HepG2 (cell line): ENCODE measurements at regions of chr7 and their contacts with region 1.

Region 1: DNA sequence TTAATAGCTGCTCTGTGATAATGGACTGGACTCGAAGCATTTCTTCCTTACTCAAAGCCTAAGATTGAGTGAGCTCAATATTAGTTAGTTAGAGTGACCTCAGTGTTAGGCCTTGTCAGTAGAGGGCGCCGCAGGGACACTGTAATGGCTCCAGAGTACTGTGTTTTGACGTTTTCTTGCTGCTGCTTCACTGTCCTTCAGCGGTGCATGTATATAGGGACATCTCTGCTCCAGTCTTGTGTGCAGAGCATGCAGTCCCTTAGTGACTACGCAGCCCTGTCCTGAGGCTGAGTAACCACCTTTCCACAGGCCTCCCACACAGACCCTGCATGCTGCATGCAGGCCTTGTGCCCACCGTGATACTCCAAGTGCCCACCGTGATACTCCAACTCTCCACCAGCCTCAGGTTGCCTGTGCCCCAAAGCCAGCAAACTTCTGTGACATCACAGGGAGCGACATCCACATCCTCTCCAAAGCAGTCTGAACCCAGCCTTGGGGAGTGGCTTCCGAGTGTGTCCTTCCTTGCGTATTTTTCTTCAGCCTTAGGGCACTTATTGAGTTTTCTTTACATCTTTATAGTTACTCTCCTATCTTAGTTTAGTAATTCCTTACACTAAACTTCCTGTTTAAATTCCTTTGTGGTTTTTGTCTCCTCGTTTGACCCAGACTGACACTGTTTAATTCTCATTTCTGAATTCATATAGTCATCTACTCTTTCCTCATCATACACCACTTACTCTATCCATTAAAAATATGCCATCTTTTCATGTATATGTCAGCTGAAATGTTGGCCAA is 118.2 kb downstream of the JAZF1 start:
- DNase-seq: peak; percentile 40
- ATAC-seq: peak; percentile 97
- H3K4me3 ChIP-seq: no peak overlapping the region
- H3K27ac ChIP-seq: no peak overlapping the region
- H3K4me1 ChIP-seq: no peaks in the 10 kb centered on the region
- H3K27me3 ChIP-seq: peaks cover 0 to 6% of the 10 kb centered on the region in 2 experiments; a peak in 2 of 5 replicates
- CTCF ChIP-seq: peak; percentile 79
- EP300 ChIP-seq: no peak
- POLR2A ChIP-seq: no peak
- RAD21 ChIP-seq: no peak

Region 2: GRCh38 chr7:27472043-27472442 is 590.4 kb before region 1 on chr7:
- CTCF ChIA-PET with region 1: no interaction called
- POLR2A ChIA-PET with region 1: no interaction called
- in situ Hi-C with region 1: no loop called
- intact Hi-C with region 1: no loop called
- DNase-seq: no peak
- ATAC-seq: no peak
- H3K4me3 ChIP-seq: no peak overlapping the region
- H3K27ac ChIP-seq: no peak overlapping the region
- H3K4me1 ChIP-seq: no peaks in the 10 kb centered on the region
- H3K27me3 ChIP-seq: no peaks in the 10 kb centered on the region
- CTCF ChIP-seq: no peak
- EP300 ChIP-seq: no peak
- POLR2A ChIP-seq: no peak
- RAD21 ChIP-seq: no peak

Region 3: GRCh38 chr7:28078036-28078901 is 15.9 kb after region 1 on chr7:
- CTCF ChIA-PET with region 1: no interaction called
- POLR2A ChIA-PET with region 1: interaction called, 3 read pairs
- in situ Hi-C with region 1: no loop called
- intact Hi-C with region 1: loop called (anchors 1 kb)
- DNase-seq: peak; percentile 24
- ATAC-seq: no peak
- H3K4me3 ChIP-seq: no peak overlapping the region
- H3K27ac ChIP-seq: no peak overlapping the region
- H3K4me1 ChIP-seq: no peaks in the 10 kb centered on the region
- H3K27me3 ChIP-seq: peaks cover 0 to 6% of the 10 kb centered on the region in 2 experiments; a peak in 2 of 5 replicates
- CTCF ChIP-seq: peak; percentile 74
- EP300 ChIP-seq: no peak
- POLR2A ChIP-seq: no peak
- RAD21 ChIP-seq: no peak

Region 4: DNA sequence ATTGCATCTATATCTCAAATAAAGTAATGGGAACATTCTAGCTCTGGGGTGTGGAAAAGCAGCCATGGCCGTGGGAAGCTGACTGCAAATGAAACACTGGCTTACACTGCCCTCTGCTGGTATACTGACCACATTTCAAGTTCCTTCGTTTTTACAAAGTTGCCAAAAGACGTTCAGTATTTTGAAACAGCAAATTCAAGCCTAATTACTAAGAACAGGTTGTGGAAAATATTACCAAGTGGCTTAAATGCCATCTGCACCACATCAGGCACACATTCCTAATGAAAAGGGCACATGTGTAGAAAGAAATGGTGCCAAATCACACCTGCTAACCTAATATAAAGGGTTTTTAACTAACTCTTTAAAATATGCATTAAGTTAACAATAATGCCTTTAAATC is 34.3 kb after region 1 on chr7:
- CTCF ChIA-PET with region 1: interaction called, 4 read pairs
- POLR2A ChIA-PET with region 1: no interaction called
- in situ Hi-C with region 1: no loop called
- intact Hi-C with region 1: loop called (anchors 1 kb)
- DNase-seq: peak; percentile 27
- ATAC-seq: peak; percentile 41; the same call in 1 of the 3 replicates
- H3K4me3 ChIP-seq: no peak overlapping the region
- H3K27ac ChIP-seq: no peak overlapping the region
- H3K4me1 ChIP-seq: no peaks in the 10 kb centered on the region
- H3K27me3 ChIP-seq: peaks cover 0 to 7% of the 10 kb centered on the region in 2 experiments; a peak in 1 of 5 replicates
- CTCF ChIP-seq: peak; percentile 71
- EP300 ChIP-seq: no peak
- POLR2A ChIP-seq: no peak
- RAD21 ChIP-seq: no peak

Region 5: DNA sequence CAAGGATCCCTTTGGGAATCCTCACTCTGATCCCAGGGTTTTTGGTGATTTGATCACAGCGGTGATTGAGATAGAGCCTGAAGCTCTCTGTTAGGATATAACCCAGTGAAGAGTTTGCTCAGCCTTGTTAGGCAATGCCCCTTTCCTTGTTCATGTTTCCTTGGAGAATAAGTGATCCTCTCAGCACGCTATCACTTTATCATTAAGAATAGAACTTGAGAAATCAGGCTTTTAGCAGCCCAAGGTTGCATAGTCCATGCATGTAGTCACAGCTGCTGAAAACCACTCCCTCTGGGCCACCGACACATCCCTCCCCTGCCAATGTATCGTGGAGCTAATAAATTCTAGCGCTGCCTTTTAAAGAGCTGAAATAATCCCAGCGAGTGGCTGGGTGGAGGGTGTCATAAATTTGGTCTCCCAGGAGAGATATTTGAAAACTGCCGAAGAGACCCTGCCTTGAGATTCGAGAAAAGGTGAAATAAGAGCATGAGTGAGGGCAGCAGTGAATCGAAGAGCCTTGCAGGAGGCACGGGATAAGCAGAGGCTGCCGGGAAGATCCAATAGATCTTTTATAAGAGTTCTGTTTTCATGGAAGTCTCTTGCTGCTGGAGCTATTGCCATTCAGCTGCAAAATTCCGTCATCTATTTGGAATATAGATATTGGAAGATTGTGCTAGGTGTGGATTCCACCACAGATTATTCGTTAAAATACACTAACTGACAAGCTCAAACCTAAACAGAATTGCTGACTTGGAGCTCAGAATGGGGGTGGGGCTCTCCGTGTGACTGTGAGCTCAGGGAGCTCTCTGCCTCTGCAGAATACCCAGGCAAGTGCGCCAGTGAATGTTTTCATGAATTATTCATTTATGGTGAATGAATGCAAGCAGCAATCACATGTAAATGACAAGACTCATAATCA is 645.9 kb after region 1 on chr7:
- CTCF ChIA-PET with region 1: no interaction called
- POLR2A ChIA-PET with region 1: no interaction called
- in situ Hi-C with region 1: no loop called
- intact Hi-C with region 1: no loop called
- DNase-seq: no peak
- ATAC-seq: no peak
- H3K4me3 ChIP-seq: no peak overlapping the region
- H3K27ac ChIP-seq: no peak overlapping the region
- H3K4me1 ChIP-seq: no peaks in the 10 kb centered on the region
- H3K27me3 ChIP-seq: peaks cover 0 to 3% of the 10 kb centered on the region in 2 experiments; a peak in 1 of 5 replicates
- CTCF ChIP-seq: no peak
- EP300 ChIP-seq: no peak
- POLR2A ChIP-seq: no peak
- RAD21 ChIP-seq: no peak